ENCODE measurements at regions of chr12 and their contacts with region 1.

Region 1: DNA sequence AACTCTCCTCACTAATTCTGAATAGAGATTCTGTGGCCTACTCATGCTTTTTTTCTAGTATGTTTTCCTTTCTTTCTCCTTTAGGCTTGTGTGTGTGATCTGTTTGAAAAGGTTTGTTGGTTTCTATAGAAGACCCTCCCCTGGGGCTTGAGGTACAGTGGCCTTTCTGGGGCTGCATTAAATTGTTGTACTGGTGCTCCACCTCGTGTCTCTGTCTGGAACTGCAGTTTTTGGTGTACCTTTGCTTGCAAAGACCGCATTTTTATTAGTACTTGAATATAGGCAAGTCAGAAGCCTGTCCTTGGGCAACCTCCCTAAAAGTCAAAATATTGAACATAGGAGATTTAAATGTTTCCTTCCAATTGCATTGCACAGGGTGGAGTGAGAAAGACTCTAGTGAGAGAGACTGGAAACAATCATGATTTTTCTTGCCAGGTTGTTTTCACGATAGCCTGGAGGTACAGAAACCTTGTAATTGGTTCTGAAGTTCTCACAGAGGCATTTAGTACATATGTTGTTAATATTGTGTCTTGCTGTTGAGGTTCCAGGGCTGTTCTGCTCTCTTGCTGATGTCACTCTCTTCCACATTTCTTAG is 39.0 kb downstream of the SLCO1B1 start:
- DNase-seq: peak; percentile 67 to 81
- H3K4me3 ChIP-seq: no peak overlapping the region
- H3K4me3 Mint-ChIP-seq: no peak overlapping the region
- H3K27ac Mint-ChIP-seq: no peak overlapping the region
- H3K4me1 ChIP-seq: no peaks in the 10 kb centered on the region
- H3K4me1 Mint-ChIP-seq: no peaks in the 10 kb centered on the region
- H3K27me3 ChIP-seq: no peaks in the 10 kb centered on the region
- H3K27me3 Mint-ChIP-seq: peaks cover 3% of the 10 kb centered on the region
- CTCF ChIP-seq: peak; percentile 76 to 96

Region 2: DNA sequence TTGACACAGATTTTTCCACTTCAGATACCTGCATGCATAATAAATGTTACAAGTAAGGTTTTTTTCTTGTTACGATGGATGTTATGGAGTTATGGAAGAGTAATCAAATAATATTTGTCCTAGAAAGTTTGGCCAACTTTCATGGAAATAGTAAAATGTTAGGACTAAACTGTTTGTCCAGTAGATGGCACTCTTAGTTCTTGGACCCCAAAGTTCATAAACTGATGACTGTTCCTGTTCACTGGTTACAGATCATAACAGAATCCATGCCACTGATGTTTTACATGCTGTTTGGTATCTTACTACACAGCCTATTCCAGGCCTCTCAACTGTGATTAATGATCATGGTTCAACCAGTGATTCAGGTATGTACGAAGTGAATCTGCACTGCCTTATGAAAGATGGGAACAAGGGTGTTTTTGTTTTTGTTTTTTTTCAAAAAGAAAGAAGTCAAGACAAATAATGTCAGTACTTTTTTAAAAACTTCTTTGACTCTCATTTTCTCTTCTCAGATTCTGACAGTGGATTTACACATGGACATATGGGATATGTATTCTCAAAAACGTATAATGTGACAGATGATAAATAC is 523.6 kb before region 1 on chr12:
- CTCF ChIA-PET with region 1: no interaction called
- POLR2A ChIA-PET with region 1: no interaction called
- intact Hi-C with region 1: loop called (anchors 1 kb)
- DNase-seq: peak in 1 of 2 experiments; percentile 36
- H3K4me3 ChIP-seq: no peak overlapping the region
- H3K4me3 Mint-ChIP-seq: no peak overlapping the region
- H3K27ac Mint-ChIP-seq: no peak overlapping the region
- H3K4me1 ChIP-seq: no peaks in the 10 kb centered on the region
- H3K4me1 Mint-ChIP-seq: no peaks in the 10 kb centered on the region
- H3K27me3 ChIP-seq: no peaks in the 10 kb centered on the region
- H3K27me3 Mint-ChIP-seq: no peaks in the 10 kb centered on the region
- CTCF ChIP-seq: peak; percentile 63 to 65

Region 3: GRCh38 chr12:20716037-20716436 is 453.9 kb before region 1 on chr12:
- CTCF ChIA-PET with region 1: no interaction called
- POLR2A ChIA-PET with region 1: no interaction called
- intact Hi-C with region 1: loop called (anchors 1 kb)
- DNase-seq: peak; percentile 41 to 44
- H3K4me3 ChIP-seq: no peak overlapping the region
- H3K4me3 Mint-ChIP-seq: no peak overlapping the region
- H3K27ac Mint-ChIP-seq: no peak overlapping the region
- H3K4me1 ChIP-seq: no peaks in the 10 kb centered on the region
- H3K4me1 Mint-ChIP-seq: no peaks in the 10 kb centered on the region
- H3K27me3 ChIP-seq: no peaks in the 10 kb centered on the region
- H3K27me3 Mint-ChIP-seq: peaks cover 3% of the 10 kb centered on the region
- CTCF ChIP-seq: peak; percentile 21 to 57

Region 4: DNA sequence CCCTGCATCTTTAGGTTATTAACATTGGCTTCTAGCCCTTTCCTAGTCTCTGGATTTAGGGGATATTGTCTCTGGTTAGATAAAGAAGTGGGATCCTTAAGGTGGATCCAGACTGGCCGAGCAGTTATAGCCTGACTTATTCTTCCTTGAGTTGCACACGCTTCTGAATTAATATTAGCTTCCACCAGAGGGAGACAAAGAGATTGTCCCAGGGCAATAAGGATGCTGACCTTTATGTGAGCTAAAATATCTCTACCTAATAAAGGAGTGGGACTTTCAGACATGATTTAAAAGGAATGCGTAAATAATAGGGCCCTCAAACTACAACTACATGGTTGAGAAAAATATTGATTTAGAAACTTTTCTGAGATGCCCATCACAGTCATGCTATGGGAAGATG is 219.7 kb before region 1 on chr12:
- CTCF ChIA-PET with region 1: no interaction called
- POLR2A ChIA-PET with region 1: no interaction called
- intact Hi-C with region 1: loop called (anchors 1 kb)
- DNase-seq: peak in 1 of 2 experiments; percentile 57
- H3K4me3 ChIP-seq: no peak overlapping the region
- H3K4me3 Mint-ChIP-seq: no peak overlapping the region
- H3K27ac Mint-ChIP-seq: no peak overlapping the region
- H3K4me1 ChIP-seq: peaks cover 1% of the 10 kb centered on the region; the same call in 1 of the 2 replicates
- H3K4me1 Mint-ChIP-seq: peaks cover 4% of the 10 kb centered on the region
- H3K27me3 ChIP-seq: no peaks in the 10 kb centered on the region
- H3K27me3 Mint-ChIP-seq: peaks cover 4% of the 10 kb centered on the region
- CTCF ChIP-seq: peak; percentile 61 to 76

Region 5: DNA sequence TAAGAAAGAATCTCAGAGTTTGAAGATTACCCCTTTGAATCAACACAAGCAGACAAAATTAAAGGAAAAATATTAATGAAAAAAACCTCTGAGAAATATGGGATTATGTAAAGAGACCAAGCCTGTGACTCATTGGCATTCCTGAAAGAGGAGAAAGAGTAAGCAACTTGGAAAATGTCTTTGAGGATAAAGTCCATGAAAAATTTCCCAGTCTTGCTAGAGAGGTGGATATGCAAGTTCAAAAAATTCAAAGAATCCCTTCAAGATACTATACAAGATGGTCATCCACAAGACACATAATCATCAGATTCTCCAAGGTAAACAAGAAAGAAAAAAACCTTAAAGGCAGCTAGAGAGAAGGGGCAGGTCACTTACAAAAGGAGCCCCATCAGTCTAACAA is 25.7 kb before region 1 on chr12:
- CTCF ChIA-PET with region 1: no interaction called
- POLR2A ChIA-PET with region 1: no interaction called
- intact Hi-C with region 1: loop called (anchors 1 kb)
- DNase-seq: peak in 1 of 2 experiments; percentile 14
- H3K4me3 ChIP-seq: no peak overlapping the region
- H3K4me3 Mint-ChIP-seq: peak overlapping the region; percentile 44
- H3K27ac Mint-ChIP-seq: peak overlapping the region; percentile 70
- H3K4me1 ChIP-seq: peaks cover 28% of the 10 kb centered on the region
- H3K4me1 Mint-ChIP-seq: peaks cover 17% of the 10 kb centered on the region
- H3K27me3 ChIP-seq: no peaks in the 10 kb centered on the region
- H3K27me3 Mint-ChIP-seq: no peaks in the 10 kb centered on the region
- CTCF ChIP-seq: no peak